Ascending aorta (tissue), 2 donors: ENCODE measurements at regions of chr17 and their contacts with region 1.

Region 1: GRCh38 chr17:45317112-45317928 is 500 bp upstream of the MAP3K14 start:
- DNase-seq: peak; percentile 99 to 100
- H3K4me3 ChIP-seq: peak overlapping the region; percentile 79 to 80
- H3K27ac ChIP-seq: peak overlapping the region; percentile 71 to 96
- H3K4me1 ChIP-seq: peaks cover 9 to 64% of the 10 kb centered on the region in 2 donors
- H3K27me3 ChIP-seq: no peaks in the 10 kb centered on the region
- CTCF ChIP-seq: no peak

Region 2: DNA sequence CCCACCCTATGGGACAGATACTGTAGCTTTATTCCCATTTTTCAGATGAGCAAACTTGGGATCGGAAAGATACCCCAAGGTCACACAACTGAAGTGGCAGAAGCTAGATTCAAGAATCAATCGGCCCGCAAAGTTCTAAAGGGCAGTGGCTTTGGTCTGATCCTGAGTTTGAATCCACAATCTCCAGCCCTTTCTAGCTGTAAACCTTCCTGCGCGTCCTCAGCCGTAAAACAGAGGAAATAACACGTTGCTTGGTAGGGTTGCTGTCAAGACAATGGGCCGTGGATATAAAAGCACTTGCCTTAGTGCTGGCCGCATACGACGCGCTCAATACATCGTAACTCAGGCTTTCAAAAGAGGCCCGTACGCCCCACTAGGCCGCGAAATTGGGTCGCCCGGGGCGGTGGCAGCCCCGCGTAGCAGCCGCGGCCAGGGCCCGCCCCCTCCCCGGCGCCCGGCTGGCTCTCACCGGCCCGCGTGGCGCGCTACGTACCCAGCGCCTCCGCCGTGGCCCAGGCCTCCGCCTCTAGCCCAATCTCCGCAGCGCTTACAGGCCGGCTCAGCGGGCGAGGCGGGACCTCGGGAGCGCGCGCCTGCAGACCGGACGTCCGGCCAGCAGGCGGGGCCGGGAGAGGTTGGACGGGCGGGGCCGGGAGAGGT is 266.1 kb before region 1 on chr17 and contains the start of gene DCAKD:
- intact Hi-C with region 1: loop called (anchors 1 kb)
- DNase-seq: peak; percentile 82 to 98
- H3K4me3 ChIP-seq: peak within 1 kb of the TSS; percentile 61 to 67
- H3K27ac ChIP-seq: peak within 1 kb of the TSS; percentile 92 to 94
- H3K4me1 ChIP-seq: peaks cover 8 to 17% of the 10 kb centered on the region in 2 donors
- H3K27me3 ChIP-seq: no peaks in the 10 kb centered on the region
- CTCF ChIP-seq: peak in 1 of 3 experiments; percentile 17
- total RNA-seq, gene DCAKD: 5.0 TPM

Region 3: GRCh38 chr17:45098869-45099616 is 218.3 kb before region 1 on chr17:
- intact Hi-C with region 1: no loop called
- DNase-seq: peak; percentile 63 to 97
- H3K4me3 ChIP-seq: peak overlapping the region in 1 of 2 donors; percentile 9
- H3K27ac ChIP-seq: peak overlapping the region; percentile 64 to 80
- H3K4me1 ChIP-seq: peaks cover 16 to 45% of the 10 kb centered on the region in 2 donors
- H3K27me3 ChIP-seq: no peaks in the 10 kb centered on the region
- CTCF ChIP-seq: peak; percentile 85 to 96 (median 91)

Region 4: GRCh38 chr17:45172454-45173286 is 144.7 kb before region 1 on chr17:
- intact Hi-C with region 1: loop called (anchors 5 kb)
- DNase-seq: peak; percentile 29 to 93
- H3K4me3 ChIP-seq: peak overlapping the region; percentile 59 to 68
- H3K27ac ChIP-seq: peak overlapping the region; percentile 95
- H3K4me1 ChIP-seq: peaks cover 3 to 28% of the 10 kb centered on the region in 2 donors
- H3K27me3 ChIP-seq: no peaks in the 10 kb centered on the region
- CTCF ChIP-seq: peak in 1 of 3 experiments; percentile 2

Region 5: GRCh38 chr17:45293413-45294211 is 23.7 kb before region 1 on chr17:
- intact Hi-C with region 1: loop called (anchors 1 kb)
- DNase-seq: peak; percentile 78 to 94
- H3K4me3 ChIP-seq: no peak overlapping the region
- H3K27ac ChIP-seq: peak overlapping the region; percentile 81 to 85
- H3K4me1 ChIP-seq: peaks cover 26 to 61% of the 10 kb centered on the region in 2 donors
- H3K27me3 ChIP-seq: no peaks in the 10 kb centered on the region
- CTCF ChIP-seq: peak in 1 of 3 experiments; percentile 21

Region 6: DNA sequence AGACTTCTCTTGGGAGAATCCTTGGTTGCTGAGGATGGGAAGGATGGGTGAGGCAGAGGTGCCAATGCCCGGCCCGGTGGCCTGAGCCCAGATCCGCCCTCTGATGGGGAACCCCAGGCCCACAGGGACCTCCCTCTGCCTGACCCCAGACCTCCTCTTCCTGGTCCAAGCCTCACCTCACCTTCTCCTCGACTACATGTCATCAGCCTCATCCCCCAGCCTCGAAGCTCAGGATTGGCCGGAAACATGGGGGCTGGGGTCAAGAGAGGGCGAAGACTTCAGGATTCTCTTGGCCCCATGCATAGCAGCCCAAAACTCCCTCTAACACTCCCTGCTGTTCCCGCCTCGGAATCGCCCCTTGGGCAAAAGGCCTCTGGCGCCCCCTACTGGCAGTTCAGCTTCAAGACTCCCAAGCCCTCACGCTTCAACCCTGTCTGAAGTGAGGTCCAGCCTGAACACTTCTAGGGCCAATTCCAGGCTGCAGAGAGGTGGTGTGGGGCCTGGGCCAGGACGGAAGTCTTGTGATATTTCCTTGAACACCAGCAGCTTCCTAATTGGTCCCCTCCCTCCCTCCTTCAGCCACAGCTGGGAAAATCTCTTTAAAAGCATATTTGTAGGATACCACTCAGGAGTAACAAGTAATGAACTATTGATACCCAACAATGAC is 68.1 kb after region 1 on chr17:
- intact Hi-C with region 1: loop called (anchors 2 kb)
- DNase-seq: peak; percentile 44 to 90
- H3K4me3 ChIP-seq: no peak overlapping the region
- H3K27ac ChIP-seq: no peak overlapping the region
- H3K4me1 ChIP-seq: no peaks in the 10 kb centered on the region
- H3K27me3 ChIP-seq: no peaks in the 10 kb centered on the region
- CTCF ChIP-seq: peak; percentile 95 to 99 (median 98)